Cardiac septum (tissue), 1 donor: ENCODE measurements at regions of chr9 and their contacts with region 1.

Region 1: DNA sequence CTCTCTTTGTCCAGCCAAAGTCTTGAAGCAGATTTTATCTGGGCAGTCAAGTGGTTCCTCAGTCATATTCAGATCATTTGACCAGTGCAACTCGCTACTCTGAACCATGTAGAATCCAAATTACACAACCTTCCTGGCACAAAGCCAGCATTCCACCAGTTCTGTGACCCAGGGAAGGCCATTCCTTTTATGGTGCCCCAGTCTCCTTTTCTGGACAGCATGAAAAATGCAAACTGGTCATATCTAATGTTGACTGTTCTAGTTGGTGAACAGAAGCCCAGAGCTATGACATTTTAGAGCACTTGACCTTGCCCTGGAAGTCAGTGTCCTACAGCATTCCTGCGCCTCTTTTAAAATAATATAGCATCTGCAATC is 364.6 kb downstream of the BRINP1 start:
- DNase-seq: peak; percentile 76

Region 2: GRCh38 chr9:119026120-119026519 is 21.5 kb after region 1 on chr9:
- intact Hi-C with region 1: loop called (anchors 2 kb)
- DNase-seq: no peak

Region 3: GRCh38 chr9:119052339-119053030 is 47.9 kb after region 1 on chr9:
- intact Hi-C with region 1: loop called (anchors 1 kb)
- DNase-seq: no peak